Activated CD4-positive, alpha-beta memory T cell treated with anti-CD3 and anti-CD28 coated beads for 36 hours (primary cell): ENCODE measurements at regions of chr1 and their contacts with region 1.

Region 1: DNA sequence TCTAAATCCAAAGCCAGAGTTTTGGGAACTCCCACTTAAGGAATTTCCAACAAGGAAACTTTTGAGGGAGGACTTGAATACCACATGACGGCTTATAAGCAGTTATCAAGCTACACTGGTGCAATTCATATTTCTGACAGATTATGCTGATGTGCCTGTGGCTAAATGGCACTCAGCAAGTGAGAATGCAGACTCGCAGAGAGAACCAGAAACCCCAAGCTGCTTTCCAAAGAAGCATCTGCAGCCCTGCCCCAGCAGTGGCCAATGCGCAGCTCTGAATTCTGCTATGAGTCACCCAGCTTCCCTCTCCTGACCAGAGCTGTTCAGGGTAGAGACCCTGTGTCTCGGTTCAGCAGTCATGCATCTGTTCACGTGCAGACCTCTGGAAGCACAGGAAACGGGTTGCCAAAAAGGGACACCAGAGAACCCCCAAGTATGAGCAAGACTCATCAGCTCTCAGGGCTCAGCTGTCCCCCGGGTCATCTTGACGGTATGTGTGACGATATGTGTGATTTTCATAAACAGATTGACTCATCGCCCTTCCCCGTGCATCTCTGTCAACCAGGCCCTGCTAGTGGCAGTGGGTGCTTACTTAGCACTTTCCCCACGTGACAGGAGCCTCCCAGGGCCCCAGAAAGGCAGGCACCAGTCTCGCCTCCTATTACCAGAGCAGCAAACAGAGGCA is 76.3 kb downstream of the ITPKB start:
- DNase-seq: peak; percentile 94
- H3K4me3 Mint-ChIP-seq: peak overlapping the region; percentile 58
- H3K27ac Mint-ChIP-seq: no peak overlapping the region
- H3K4me1 Mint-ChIP-seq: peaks cover 90% of the 10 kb centered on the region
- H3K27me3 Mint-ChIP-seq: no peaks in the 10 kb centered on the region

Region 2: DNA sequence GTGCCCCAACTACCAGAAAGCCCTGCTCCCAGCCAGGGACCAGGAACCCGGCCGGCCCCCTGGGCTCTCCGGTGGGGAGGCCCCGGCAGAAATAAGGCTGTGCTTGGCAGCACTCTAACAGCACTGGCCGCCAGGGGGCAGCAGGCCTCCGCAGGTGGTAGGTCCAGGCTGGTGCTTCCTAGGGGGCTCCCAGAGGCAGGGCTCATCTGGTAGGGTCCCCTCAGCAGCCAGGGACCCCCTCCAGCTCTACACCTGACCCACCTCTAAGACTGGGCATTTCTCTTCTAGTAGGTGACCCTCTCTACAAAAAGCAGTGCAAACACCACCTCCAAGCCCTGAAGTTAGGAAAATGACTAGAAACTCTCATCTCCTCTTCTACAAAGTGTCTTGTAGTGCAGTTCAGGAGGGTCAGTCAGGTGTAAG is 28.6 kb before region 1 on chr1:
- CTCF ChIA-PET with region 1: interaction called, 33 read pairs
- POLR2A ChIA-PET with region 1: interaction called, 4 read pairs
- intact Hi-C with region 1: loop called (anchors 1 kb)
- DNase-seq: peak; percentile 86
- H3K4me3 Mint-ChIP-seq: no peak overlapping the region
- H3K27ac Mint-ChIP-seq: peak overlapping the region; percentile 11
- H3K4me1 Mint-ChIP-seq: peaks cover 57% of the 10 kb centered on the region
- H3K27me3 Mint-ChIP-seq: no peaks in the 10 kb centered on the region

Region 3: GRCh38 chr1:226642876-226643576 is 19.8 kb before region 1 on chr1:
- CTCF ChIA-PET with region 1: interaction called, 3 read pairs
- POLR2A ChIA-PET with region 1: interaction called, 18 read pairs
- intact Hi-C with region 1: loop called (anchors 1 kb)
- DNase-seq: peak; percentile 86
- H3K4me3 Mint-ChIP-seq: peak overlapping the region; percentile 14
- H3K27ac Mint-ChIP-seq: peak overlapping the region; percentile 76
- H3K4me1 Mint-ChIP-seq: peaks cover 56% of the 10 kb centered on the region
- H3K27me3 Mint-ChIP-seq: no peaks in the 10 kb centered on the region

Region 4: DNA sequence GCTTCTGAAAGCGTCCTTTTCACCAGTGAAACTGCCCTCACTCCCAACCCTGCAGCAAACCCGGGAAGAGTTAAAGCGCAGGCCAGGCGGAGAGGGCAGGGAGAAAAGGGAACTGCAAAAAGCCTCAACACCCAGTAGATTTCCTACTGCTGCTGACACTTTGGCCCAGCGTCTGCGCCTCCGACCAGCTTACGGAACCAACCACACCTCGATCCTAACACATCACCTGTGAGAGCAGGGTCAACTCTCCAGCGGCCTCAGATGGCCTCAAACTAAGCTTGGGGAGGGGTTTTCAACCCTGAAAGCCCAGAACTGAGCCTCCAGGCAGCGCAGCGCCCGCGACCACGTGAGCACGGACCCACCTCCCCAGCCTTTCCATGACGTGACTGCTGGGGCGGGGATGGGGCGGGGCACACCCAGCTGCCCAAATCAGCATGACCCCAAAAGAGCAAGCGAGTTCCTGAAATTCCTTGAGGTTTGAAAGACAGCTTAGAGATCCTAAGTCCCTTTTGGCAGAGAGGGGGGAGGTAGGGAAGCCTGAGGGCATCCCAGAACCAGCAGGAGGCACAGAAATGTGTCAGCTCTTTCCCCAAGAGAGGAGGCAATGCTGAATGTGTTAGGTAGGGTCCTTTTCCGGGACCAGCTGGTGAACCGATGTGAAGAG is 17.2 kb after region 1 on chr1:
- CTCF ChIA-PET with region 1: interaction called, 15 read pairs
- POLR2A ChIA-PET with region 1: interaction called, 10 read pairs
- intact Hi-C with region 1: loop called (anchors 1 kb)
- DNase-seq: peak; percentile 89
- H3K4me3 Mint-ChIP-seq: peak overlapping the region; percentile 71
- H3K27ac Mint-ChIP-seq: peak overlapping the region; percentile 93
- H3K4me1 Mint-ChIP-seq: peaks cover 98% of the 10 kb centered on the region
- H3K27me3 Mint-ChIP-seq: no peaks in the 10 kb centered on the region

Region 5: DNA sequence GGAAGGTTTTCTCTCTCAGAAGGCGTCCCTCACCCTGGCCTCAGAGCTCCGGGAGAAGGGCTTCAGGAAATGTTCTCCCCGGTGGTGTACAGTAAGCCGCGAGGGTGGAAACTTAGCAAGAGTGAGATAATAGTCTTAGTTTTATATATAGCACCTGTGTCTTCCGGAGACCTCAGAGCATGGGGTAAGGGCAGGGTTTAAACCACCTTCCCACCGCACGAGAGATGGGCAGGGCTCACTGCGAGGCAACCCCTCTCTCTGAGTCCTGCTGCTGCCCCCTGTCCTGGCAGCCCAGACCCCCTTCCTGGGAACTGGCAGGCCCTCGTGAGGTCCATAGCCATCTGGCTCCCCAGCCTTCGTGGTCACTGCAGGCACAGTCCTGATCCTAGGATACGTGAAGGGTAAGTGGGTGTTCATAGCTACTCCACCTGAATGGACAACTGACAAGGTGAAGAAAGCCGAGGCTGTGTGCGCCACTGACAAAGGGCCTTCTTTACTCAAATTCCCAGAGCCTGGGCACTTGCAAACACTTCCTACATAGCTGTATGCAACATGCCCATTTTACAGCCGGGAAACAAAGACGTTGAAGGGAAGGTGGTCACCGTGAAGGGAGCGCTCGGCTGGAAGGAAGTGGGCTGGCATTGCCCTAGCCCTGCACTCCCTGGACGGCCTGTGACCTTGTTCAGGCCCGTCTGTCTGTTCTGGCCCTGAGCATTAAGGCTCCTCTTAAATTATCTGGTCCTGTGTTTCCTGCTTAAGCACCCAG is 49.4 kb after region 1 on chr1:
- CTCF ChIA-PET with region 1: interaction called, 9 read pairs
- POLR2A ChIA-PET with region 1: no interaction called
- intact Hi-C with region 1: loop called (anchors 1 kb)
- DNase-seq: peak; percentile 81
- H3K4me3 Mint-ChIP-seq: peak overlapping the region; percentile 57
- H3K27ac Mint-ChIP-seq: peak overlapping the region; percentile 85
- H3K4me1 Mint-ChIP-seq: peaks cover 94% of the 10 kb centered on the region
- H3K27me3 Mint-ChIP-seq: no peaks in the 10 kb centered on the region

Region 6: DNA sequence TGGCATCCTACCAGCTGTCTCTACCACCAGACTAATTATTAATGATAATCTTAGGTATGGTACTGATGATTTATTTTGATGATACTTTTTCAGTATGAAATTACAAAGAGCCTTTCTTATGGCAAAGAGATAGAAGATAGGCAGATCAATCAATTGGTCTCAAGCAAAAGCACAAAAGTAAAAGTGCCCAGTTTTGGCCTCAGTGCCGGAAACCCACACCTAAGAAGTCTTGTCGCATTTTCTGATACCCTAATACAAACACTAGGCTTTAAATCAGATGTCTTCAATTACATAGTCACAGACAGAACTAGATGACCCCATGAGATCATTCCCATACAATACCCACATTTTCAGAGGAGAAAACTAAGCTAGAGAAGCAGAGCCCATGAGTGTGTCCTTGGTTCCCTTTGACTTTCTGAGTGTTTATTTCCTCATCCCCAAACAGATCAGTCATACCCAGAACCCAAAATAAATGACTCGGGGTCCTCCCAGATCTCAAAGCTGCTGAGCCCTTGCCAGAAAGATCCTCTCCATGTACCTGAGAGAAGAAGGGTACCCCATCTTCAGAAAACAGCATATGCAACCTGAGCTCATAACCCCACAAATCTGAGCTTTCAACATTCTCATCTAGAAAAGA is 68.6 kb after region 1 on chr1:
- CTCF ChIA-PET with region 1: no interaction called
- POLR2A ChIA-PET with region 1: interaction called, 7 read pairs
- intact Hi-C with region 1: loop called (anchors 2 kb)
- DNase-seq: peak; percentile 32
- H3K4me3 Mint-ChIP-seq: peak overlapping the region; percentile 71
- H3K27ac Mint-ChIP-seq: peak overlapping the region; percentile 87
- H3K4me1 Mint-ChIP-seq: peaks cover 86% of the 10 kb centered on the region
- H3K27me3 Mint-ChIP-seq: no peaks in the 10 kb centered on the region